Ascending aorta (tissue), 2 donors: ENCODE measurements at regions of chr13 and their contacts with region 1.

Region 1: DNA sequence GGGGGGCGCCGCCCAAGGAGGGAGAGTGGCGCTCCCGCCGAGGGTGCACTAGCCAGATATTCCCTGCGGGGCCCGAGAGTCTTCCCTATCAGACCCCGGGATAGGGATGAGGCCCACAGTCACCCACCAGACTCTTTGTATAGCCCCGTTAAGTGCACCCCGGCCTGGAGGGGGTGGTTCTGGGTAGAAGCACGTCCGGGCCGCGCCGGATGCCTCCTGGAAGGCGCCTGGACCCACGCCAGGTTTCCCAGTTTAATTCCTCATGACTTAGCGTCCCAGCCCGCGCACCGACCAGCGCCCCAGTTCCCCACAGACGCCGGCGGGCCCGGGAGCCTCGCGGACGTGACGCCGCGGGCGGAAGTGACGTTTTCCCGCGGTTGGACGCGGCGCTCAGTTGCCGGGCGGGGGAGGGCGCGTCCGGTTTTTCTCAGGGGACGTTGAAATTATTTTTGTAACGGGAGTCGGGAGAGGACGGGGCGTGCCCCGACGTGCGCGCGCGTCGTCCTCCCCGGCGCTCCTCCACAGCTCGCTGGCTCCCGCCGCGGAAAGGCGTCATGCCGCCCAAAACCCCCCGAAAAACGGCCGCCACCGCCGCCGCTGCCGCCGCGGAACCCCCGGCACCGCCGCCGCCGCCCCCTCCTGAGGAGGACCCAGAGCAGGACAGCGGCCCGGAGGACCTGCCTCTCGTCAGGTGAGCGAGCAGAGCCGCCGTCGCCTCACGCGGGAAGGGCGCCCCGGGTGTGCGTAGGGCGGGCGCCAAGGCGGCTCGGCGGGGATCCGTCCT is at the start of gene RB1:
- DNase-seq: peak; percentile 73 to 96
- H3K4me3 ChIP-seq: peak within 1 kb of the TSS; percentile 72 to 97
- H3K27ac ChIP-seq: peak within 1 kb of the TSS; percentile 98 to 99
- H3K4me1 ChIP-seq: peaks cover 0 to 20% of the 10 kb centered on the region in 2 donors
- H3K27me3 ChIP-seq: no peaks in the 10 kb centered on the region
- CTCF ChIP-seq: no peak
- total RNA-seq, gene RB1: 10.6 TPM

Region 2: DNA sequence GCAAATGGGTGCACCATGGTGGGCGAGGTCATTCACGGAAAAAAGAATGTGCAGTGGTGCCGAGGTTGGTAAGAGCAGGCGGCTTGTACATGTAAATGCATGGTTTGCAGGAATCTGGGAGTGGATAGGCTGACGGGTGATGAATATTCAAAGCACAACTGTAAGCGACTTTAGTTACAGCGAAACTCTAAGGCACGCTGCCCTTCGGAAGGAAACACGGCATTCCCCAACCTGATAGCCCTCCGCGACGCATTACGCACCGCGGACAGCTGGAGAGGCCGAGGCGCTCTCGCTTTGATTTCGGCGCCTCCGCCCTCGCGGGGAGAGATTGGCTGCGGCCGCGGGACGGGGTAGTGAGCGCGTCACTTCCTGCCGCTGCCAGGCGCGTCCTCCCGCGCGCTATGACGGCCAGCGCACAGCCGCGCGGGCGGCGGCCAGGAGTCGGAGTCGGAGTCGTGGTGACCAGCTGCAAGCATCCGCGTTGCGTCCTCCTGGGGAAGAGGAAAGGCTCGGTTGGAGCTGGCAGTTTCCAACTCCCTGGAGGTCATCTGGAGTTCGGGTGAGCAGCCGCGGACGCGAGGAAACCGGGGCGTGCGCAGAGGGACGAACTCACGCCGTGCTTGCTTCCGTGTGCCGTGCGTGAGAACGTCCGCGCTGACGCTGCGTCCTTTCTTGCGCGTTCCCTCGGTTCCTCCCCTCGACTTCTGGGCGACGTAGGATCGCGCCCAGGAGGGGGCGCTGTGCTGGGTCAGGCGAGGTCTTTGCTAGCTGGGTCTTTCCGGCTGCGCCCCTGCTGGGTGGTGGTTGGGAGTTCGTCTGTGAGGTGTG is 266.0 kb before region 1 on chr13 and contains the start of gene NUDT15:
- intact Hi-C with region 1: loop called (anchors 1 kb)
- DNase-seq: peak; percentile 61 to 95
- H3K4me3 ChIP-seq: peak within 1 kb of the TSS; percentile 78 to 91
- H3K27ac ChIP-seq: peak within 1 kb of the TSS; percentile 94 to 96
- H3K4me1 ChIP-seq: peaks cover 0 to 11% of the 10 kb centered on the region in 2 donors
- H3K27me3 ChIP-seq: no peaks in the 10 kb centered on the region
- CTCF ChIP-seq: peak; percentile 95 to 97 (median 96)
- total RNA-seq, gene NUDT15: 4.2 TPM

Region 3: GRCh38 chr13:48094781-48095502 is 208.6 kb before region 1 on chr13 and contains the start of gene MED4:
- intact Hi-C with region 1: loop called (anchors 2 kb)
- DNase-seq: peak; percentile 75 to 98
- H3K4me3 ChIP-seq: peak within 1 kb of the TSS; percentile 80 to 86
- H3K27ac ChIP-seq: peak within 1 kb of the TSS; percentile 83 to 85
- H3K4me1 ChIP-seq: peaks cover 8 to 15% of the 10 kb centered on the region in 2 donors
- H3K27me3 ChIP-seq: no peaks in the 10 kb centered on the region
- CTCF ChIP-seq: peak; percentile 98 to 99 (median 99)
- total RNA-seq, gene MED4: 8.6 TPM

Region 4: DNA sequence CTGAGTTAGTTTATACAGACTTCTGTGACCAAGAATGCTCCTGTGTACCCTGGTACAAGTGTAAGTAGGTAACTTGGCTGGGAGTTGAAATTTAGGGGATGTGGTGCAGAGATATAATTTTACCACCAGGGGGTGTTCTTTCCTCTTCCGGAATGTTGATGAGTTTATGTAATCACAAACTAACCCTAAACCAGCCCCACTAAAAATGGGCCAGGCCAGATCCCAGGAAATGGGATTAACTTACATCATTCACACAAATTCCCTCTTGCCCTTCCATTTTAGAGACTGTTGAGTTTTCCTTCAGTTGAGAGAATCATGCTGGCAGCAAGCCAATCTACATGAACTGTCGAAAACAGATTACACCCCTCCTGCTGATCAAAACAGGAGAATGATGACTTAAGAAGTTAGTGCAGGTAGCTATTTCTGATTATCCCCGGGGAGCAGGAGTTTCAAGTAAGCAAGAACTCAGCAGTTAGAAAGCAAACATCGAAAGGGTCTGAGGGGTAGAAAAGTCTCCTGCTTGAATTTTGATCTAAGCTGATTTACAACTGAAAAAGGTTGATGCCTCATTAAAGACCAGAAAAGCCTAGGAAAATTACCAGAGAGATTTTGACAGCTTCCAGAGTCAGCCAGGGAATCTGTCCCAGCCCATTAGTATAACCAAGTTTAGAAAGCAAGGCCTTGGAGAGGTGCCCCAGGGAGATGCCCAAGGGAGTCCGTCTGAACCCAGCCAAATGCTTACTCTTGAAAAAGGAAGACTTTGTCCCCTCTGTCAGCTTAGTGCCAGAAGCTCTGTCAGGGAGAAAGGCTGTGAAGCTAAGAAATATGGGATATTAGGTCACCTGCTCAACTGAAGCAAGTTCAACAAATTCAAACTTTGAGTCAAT is 176.4 kb before region 1 on chr13:
- intact Hi-C with region 1: loop called (anchors 2 kb)
- DNase-seq: peak in 1 of 2 donors; percentile 80
- H3K4me3 ChIP-seq: peak overlapping the region in 1 of 2 donors; percentile 43
- H3K27ac ChIP-seq: peak overlapping the region; percentile 80 to 91
- H3K4me1 ChIP-seq: peaks cover 8 to 13% of the 10 kb centered on the region in 2 donors
- H3K27me3 ChIP-seq: no peaks in the 10 kb centered on the region
- CTCF ChIP-seq: peak; percentile 61 to 65 (median 64)

Region 5: DNA sequence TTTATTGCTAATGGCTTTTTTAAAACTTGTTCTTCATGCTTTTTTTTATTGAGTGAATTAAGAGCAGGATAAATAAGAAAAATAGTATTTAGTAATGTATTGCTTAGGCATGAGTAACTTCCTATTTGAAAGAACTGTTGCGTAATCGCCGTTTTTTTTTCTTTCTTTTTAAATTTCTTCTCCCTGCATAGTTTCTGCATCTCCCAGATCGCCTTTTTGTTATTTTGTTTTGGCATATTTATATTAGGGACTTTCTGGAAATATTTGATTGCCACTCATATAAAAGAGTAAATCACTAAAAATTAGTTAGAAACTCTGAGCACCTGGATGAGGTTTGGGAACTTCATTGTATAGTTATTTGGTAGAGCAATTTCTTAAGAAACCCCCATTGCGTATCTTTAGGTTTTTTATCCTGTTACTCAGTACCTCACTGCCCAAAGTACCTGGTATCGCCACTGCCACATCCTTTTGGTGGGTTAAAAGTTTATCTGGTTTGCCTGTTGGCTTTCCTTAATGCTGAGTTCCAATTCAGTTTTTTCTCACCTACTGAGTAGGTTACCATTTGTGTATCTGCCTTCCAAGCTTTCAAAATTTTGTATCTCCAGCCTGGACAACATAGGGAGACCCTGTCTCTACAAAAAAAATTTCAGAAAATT is 145.5 kb after region 1 on chr13:
- intact Hi-C with region 1: loop called (anchors 2 kb)
- DNase-seq: no peak
- H3K4me3 ChIP-seq: no peak overlapping the region
- H3K27ac ChIP-seq: peak overlapping the region; percentile 48 to 56
- H3K4me1 ChIP-seq: peaks cover 5 to 26% of the 10 kb centered on the region in 2 donors
- H3K27me3 ChIP-seq: no peaks in the 10 kb centered on the region
- CTCF ChIP-seq: no peak

Region 6: DNA sequence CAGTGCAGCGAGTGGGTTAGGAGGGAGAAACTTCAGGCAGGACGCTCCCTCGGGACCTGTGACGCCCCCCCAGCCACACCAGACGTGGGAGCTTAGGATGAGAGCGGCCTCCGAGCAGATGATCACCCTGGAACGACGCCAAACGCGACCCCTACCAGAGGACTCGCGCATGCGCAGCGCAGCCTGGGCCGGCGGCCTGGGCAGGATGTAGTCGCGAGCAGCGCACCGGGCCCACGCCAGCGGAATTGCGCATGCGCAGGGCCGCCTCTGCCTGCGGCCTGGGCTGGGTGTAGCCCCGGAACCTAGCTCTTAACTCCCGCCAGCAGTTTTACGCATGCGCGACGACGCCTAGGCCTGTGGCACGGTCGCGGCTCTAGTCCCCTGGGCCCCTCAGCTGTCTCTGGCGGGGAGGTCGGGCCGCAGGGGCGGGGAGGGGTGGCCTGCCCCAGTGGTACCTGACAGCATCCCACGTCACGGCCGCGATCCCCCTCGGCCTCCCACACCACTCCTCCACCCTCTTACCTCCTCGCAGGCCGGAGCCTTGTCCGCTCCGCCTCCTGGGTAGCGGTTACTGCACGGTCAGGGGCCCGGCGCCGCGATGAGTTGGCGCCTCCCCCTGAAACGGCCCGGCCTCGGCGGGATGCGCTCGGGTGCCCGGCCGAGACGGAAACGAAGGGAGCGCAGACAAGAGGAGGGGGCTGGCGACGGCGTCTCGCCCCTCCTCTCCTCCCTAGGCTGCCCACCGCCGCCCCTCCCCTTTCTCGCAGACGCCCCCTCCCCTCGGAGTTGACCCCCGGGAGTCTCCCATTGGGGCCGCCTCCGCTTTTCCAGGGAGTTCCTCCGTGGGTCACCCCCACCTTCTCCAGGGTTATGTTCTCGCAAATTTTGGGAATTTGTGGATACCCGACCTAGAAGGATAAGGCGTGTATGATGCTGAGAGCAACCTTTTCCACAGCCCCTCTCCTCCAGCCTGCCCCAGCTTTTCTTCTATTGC is 229.3 kb after region 1 on chr13 and contains the start of gene RCBTB2:
- intact Hi-C with region 1: loop called (anchors 1 kb)
- DNase-seq: peak; percentile 91 to 99
- H3K4me3 ChIP-seq: peak within 1 kb of the TSS; percentile 78 to 83
- H3K27ac ChIP-seq: peak within 1 kb of the TSS; percentile 98 to 99
- H3K4me1 ChIP-seq: peaks cover 0 to 6% of the 10 kb centered on the region in 2 donors
- H3K27me3 ChIP-seq: no peaks in the 10 kb centered on the region
- CTCF ChIP-seq: no peak
- total RNA-seq, gene RCBTB2: 1.8 TPM